Activated CD4-positive, alpha-beta T cell treated with anti-CD3 and anti-CD28 coated beads for 36 hours (primary cell): ENCODE measurements at regions of chr9 and their contacts with region 1.

Region 1: DNA sequence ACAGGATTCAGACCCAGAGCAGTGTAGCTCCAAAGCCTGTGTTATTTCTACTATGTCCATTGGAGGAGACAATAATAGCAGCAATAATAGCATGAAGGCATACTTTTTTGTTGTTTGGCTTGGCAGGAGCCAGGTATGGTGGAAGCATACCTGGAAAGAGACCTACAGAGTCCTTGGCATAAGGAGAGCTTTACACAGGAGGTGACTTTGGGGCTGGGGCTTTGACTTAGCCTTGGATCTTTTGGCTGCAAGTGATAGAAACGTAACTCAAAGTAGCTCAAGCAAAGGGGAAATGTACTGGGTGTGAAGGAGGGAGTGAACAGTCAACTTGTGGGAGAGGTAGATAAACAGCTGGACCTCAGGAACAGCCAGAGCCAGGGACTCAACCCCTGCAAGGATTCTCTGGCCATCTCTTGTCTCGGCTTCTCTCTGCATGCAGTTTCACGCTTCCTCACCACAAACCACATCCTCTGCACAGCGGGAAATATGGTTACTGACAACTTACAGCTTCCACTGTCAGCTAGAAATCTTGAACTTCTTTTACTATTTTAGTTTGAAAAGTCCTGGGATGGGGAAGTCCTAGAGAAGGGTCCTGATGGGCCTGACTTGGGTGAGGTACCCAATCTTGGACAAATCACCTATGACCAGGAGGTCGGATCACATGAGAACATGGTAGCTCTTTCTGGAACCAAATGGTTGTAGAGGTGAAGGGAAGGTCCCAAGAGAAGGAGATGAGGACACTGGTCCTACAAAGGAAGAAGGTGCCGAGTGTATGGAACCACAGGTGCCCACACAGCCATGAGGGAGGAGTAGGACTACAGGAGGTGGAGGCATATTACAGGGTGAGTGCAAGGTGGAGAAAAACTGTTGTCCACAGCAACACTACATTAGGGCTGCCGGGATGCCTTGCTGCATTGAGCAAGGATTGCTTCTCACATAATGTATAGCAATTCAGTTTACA is 47.0 kb upstream of the TGFBR1 start:
- DNase-seq: peak; percentile 89
- ATAC-seq: peak; percentile 59
- H3K4me3 Mint-ChIP-seq: peak overlapping the region; percentile 35
- H3K27ac Mint-ChIP-seq: peak overlapping the region; percentile 79
- H3K4me1 Mint-ChIP-seq: peaks cover 66% of the 10 kb centered on the region
- H3K27me3 Mint-ChIP-seq: peaks cover 2% of the 10 kb centered on the region

Region 2: GRCh38 chr9:97501177-97501971 is 1556.6 kb before region 1 on chr9 and contains the start of gene TMOD1:
- CTCF ChIA-PET with region 1: no interaction called
- POLR2A ChIA-PET with region 1: no interaction called
- intact Hi-C with region 1: no loop called
- DNase-seq: peak; percentile 66
- ATAC-seq: peak; percentile 67
- H3K4me3 Mint-ChIP-seq: peak within 1 kb of the TSS; percentile 64
- H3K27ac Mint-ChIP-seq: no peak within 1 kb of the TSS
- H3K4me1 Mint-ChIP-seq: peaks cover 15% of the 10 kb centered on the region
- H3K27me3 Mint-ChIP-seq: peaks cover 45% of the 10 kb centered on the region
- total RNA-seq, gene TMOD1: 1.3 to 1.5 TPM

Region 3: GRCh38 chr9:98807070-98807810 is 250.7 kb before region 1 on chr9 and contains the start of gene GALNT12:
- CTCF ChIA-PET with region 1: interaction called, 4 read pairs
- POLR2A ChIA-PET with region 1: no interaction called
- intact Hi-C with region 1: loop called in 1 of 2 experiments (anchors 2 kb)
- DNase-seq: peak; percentile 74
- ATAC-seq: peak; percentile 63
- H3K4me3 Mint-ChIP-seq: peak within 1 kb of the TSS; percentile 81
- H3K27ac Mint-ChIP-seq: peak within 1 kb of the TSS; percentile 65
- H3K4me1 Mint-ChIP-seq: peaks cover 35% of the 10 kb centered on the region
- H3K27me3 Mint-ChIP-seq: peaks cover 3% of the 10 kb centered on the region
- total RNA-seq, gene GALNT12: 10.2 to 12.7 TPM

Region 4: GRCh38 chr9:99092643-99093491 is 34.9 kb after region 1 on chr9:
- CTCF ChIA-PET with region 1: no interaction called
- POLR2A ChIA-PET with region 1: no interaction called
- intact Hi-C with region 1: no loop called
- DNase-seq: peak; percentile 60
- ATAC-seq: peak; percentile 85
- H3K4me3 Mint-ChIP-seq: peak overlapping the region; percentile 24
- H3K27ac Mint-ChIP-seq: peak overlapping the region; percentile 76
- H3K4me1 Mint-ChIP-seq: peaks cover 27% of the 10 kb centered on the region
- H3K27me3 Mint-ChIP-seq: no peaks in the 10 kb centered on the region

Region 5: DNA sequence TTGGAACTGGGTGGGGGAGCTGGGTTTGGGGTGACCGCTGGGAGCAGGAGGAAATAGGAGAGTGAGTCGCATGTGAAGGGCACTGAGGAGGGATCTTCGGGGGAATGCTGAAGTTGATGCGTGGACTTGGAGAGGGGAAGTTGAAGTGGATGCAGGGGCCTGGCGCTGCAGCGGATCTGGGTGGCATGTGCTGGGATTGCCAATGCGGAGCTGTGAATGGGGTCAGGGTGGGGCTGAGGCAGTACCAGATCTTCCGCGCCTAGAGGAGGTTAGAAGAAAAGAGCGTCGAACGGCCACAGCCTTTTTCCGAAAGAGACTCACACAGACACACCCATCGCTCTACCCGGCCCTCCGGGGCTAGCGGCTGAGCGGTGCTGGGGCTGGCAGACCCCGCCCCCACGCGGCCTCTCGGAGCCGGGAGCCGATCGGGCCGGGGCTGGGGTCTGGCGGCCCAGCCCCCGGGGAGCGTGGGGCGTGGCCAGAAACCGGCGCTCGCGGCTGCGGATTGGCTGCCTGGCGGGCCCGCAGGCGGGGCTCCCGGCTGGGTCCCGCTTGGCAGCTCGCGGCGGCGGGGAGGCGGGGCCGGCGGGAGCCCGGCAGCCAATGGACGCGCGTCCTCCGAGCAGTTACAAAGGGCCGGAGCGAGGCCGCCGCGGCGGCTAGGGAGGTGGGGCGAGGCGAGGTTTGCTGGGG is 46.7 kb after region 1 on chr9 and contains the start of gene TGFBR1:
- CTCF ChIA-PET with region 1: interaction called, 3 read pairs
- POLR2A ChIA-PET with region 1: interaction called, 6 read pairs
- intact Hi-C with region 1: loop called (anchors 2 kb)
- DNase-seq: peak; percentile 95
- ATAC-seq: peak; percentile 89
- H3K4me3 Mint-ChIP-seq: peak within 1 kb of the TSS; percentile 79
- H3K27ac Mint-ChIP-seq: peak within 1 kb of the TSS; percentile 83
- H3K4me1 Mint-ChIP-seq: peaks cover 49% of the 10 kb centered on the region
- H3K27me3 Mint-ChIP-seq: no peaks in the 10 kb centered on the region
- total RNA-seq, gene TGFBR1: 18.6 to 19.3 TPM

Region 6: GRCh38 chr9:99253772-99254431 is 196.0 kb after region 1 on chr9:
- CTCF ChIA-PET with region 1: no interaction called
- POLR2A ChIA-PET with region 1: no interaction called
- intact Hi-C with region 1: loop called (anchors 1 to 5 kb)
- DNase-seq: peak; percentile 95
- ATAC-seq: peak; percentile 83
- H3K4me3 Mint-ChIP-seq: peak overlapping the region; percentile 58
- H3K27ac Mint-ChIP-seq: peak overlapping the region; percentile 95
- H3K4me1 Mint-ChIP-seq: peaks cover 60% of the 10 kb centered on the region
- H3K27me3 Mint-ChIP-seq: peaks cover 5% of the 10 kb centered on the region

Region 7: GRCh38 chr9:99807276-99807852 is 749.4 kb after region 1 on chr9:
- CTCF ChIA-PET with region 1: no interaction called
- POLR2A ChIA-PET with region 1: no interaction called
- intact Hi-C with region 1: loop called in 1 of 2 experiments (anchors 5 kb)
- DNase-seq: peak; percentile 76
- ATAC-seq: no peak
- H3K4me3 Mint-ChIP-seq: no peak overlapping the region
- H3K27ac Mint-ChIP-seq: no peak overlapping the region
- H3K4me1 Mint-ChIP-seq: peaks cover 32% of the 10 kb centered on the region
- H3K27me3 Mint-ChIP-seq: peaks cover 4% of the 10 kb centered on the region